ENCODE measurements at regions of chr12 and their contacts with region 1.

Region 1: GRCh38 chr12:14803011-14803829 is at the starts of genes C12orf60 and WBP11:
- DNase-seq: peak; percentile 97
- H3K4me3 ChIP-seq: peak within 1 kb of the TSS; percentile 98
- CTCF ChIP-seq: no peak

Region 2: GRCh38 chr12:14769969-14770495 is 33.2 kb before region 1 on chr12:
- CTCF ChIA-PET with region 1: interaction called, 9 read pairs
- POLR2A ChIA-PET with region 1: interaction called, 24 read pairs
- DNase-seq: no peak
- H3K4me3 ChIP-seq: peak overlapping the region; percentile 86
- CTCF ChIP-seq: peak; percentile 94

Measured in AG04449 (cell line).